Caco-2 (cell line): ENCODE measurements at regions of chr7 and their contacts with region 1.

Region 1: DNA sequence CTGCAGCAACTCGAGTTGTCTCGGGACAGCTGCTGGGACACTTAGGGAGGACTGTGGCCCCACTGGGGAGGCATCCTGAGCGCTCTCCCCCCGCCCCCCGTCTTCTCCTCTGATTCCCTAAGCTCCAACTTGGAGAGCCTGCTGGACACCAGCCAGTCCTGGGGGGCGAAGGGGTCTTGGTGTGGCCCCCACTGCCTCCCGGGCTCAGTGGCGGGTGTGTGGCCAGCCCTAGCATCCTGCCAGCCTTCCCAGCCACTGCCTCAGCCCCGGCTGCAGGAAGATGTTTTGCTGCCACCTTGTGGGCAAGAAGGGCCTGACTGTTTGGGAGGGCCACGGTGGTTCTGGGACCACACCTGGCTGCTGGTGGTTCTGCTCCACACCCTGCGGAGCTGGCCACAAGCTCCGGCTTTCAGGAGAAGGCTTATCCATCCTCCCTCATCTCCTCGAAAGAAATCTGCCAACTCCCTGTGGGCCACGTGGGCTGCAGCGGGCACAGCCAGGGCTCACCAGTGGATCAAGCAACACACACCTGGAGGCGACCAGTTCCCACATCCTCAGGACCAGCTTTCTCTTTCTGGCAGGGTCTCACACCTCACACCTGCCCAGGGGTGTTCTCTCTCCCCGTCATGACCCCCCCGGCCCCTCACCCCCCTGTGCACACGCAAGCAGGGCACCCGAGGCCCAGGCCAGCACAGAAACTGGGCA is 24.8 kb downstream of the AGAP3 start:
- DNase-seq: peak; percentile 76 to 87
- H3K4me3 ChIP-seq: no peak overlapping the region
- H3K4me3 Mint-ChIP-seq: no peak overlapping the region
- H3K27ac Mint-ChIP-seq: no peak overlapping the region
- H3K4me1 ChIP-seq: peaks cover 41% of the 10 kb centered on the region
- H3K4me1 Mint-ChIP-seq: peaks cover 37% of the 10 kb centered on the region
- H3K27me3 ChIP-seq: no peaks in the 10 kb centered on the region
- H3K27me3 Mint-ChIP-seq: no peaks in the 10 kb centered on the region
- CTCF ChIP-seq: peak; percentile 84 to 87

Region 2: DNA sequence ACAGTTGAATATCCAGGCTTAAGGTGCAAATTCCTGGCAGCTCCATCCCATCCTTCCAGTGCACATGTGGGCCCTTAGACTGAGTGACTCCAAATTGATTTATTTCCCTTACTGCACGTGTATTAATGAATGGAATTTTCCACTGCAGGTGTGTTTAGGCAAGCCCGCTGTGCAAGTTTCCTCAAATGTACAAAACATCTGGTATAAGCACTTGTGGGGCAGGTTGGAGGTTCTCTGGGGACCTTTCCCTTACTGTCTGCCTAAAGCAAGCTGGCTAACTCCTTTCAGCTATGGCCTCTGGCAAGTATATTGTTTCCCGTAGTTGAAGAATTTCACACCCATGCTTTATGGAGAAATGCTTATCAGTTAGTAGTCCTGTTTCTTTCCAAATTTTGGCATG is 453.6 kb before region 1 on chr7:
- CTCF ChIA-PET with region 1: no interaction called
- POLR2A ChIA-PET with region 1: no interaction called
- intact Hi-C with region 1: no loop called
- DNase-seq: no peak
- H3K4me3 ChIP-seq: no peak overlapping the region
- H3K4me3 Mint-ChIP-seq: no peak overlapping the region
- H3K27ac Mint-ChIP-seq: no peak overlapping the region
- H3K4me1 ChIP-seq: no peaks in the 10 kb centered on the region
- H3K4me1 Mint-ChIP-seq: no peaks in the 10 kb centered on the region
- H3K27me3 ChIP-seq: no peaks in the 10 kb centered on the region
- H3K27me3 Mint-ChIP-seq: peaks cover 6% of the 10 kb centered on the region
- CTCF ChIP-seq: no peak

Region 3: GRCh38 chr7:150898475-150899011 is 212.6 kb before region 1 on chr7:
- CTCF ChIA-PET with region 1: no interaction called
- POLR2A ChIA-PET with region 1: no interaction called
- intact Hi-C with region 1: loop called (anchors 2 kb)
- DNase-seq: peak; percentile 78 to 82
- H3K4me3 ChIP-seq: no peak overlapping the region
- H3K4me3 Mint-ChIP-seq: peak overlapping the region; percentile 17
- H3K27ac Mint-ChIP-seq: no peak overlapping the region
- H3K4me1 ChIP-seq: peaks cover 11% of the 10 kb centered on the region; the same call in 1 of the 2 replicates
- H3K4me1 Mint-ChIP-seq: peaks cover 19% of the 10 kb centered on the region
- H3K27me3 ChIP-seq: no peaks in the 10 kb centered on the region; the same call in 1 of the 2 replicates
- H3K27me3 Mint-ChIP-seq: peaks cover 15% of the 10 kb centered on the region
- CTCF ChIP-seq: peak; percentile 91 to 95

Region 4: GRCh38 chr7:150962553-150963399 is 148.3 kb before region 1 on chr7:
- CTCF ChIA-PET with region 1: interaction called, 5 read pairs
- POLR2A ChIA-PET with region 1: no interaction called
- intact Hi-C with region 1: loop called (anchors 2 kb)
- DNase-seq: peak in 1 of 2 experiments; percentile 66
- H3K4me3 ChIP-seq: no peak overlapping the region
- H3K4me3 Mint-ChIP-seq: no peak overlapping the region
- H3K27ac Mint-ChIP-seq: no peak overlapping the region
- H3K4me1 ChIP-seq: no peaks in the 10 kb centered on the region
- H3K4me1 Mint-ChIP-seq: peaks cover 12% of the 10 kb centered on the region
- H3K27me3 ChIP-seq: no peaks in the 10 kb centered on the region
- H3K27me3 Mint-ChIP-seq: peaks cover 11% of the 10 kb centered on the region
- CTCF ChIP-seq: peak; percentile 89 to 96

Region 5: DNA sequence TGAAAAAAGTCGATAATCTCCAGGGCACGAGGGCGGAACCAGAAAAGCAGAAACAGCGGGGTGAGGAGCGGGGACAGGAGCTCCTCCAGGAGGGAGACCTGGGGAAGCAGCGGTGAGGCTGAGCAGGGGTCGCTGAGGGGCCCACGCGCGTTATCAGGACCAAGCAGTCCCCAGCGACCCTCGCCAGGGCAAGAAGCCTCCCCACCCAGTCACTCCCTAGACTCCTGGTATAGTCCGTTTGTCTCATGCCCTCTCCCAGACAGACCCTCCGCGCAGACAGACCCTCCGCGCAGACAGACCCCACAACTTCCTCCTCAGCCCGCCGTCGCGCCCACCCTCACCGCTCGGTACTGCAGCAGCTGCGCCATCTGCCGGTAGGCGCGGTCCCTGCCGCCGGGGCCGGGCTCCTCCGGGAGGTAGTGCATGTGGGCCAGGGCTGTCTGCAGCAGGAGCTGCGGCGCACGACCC is 93.1 kb before region 1 on chr7:
- CTCF ChIA-PET with region 1: interaction called, 6 read pairs
- POLR2A ChIA-PET with region 1: no interaction called
- intact Hi-C with region 1: loop called (anchors 5 kb)
- DNase-seq: peak; percentile 74 to 89
- H3K4me3 ChIP-seq: peak overlapping the region; percentile 33
- H3K4me3 Mint-ChIP-seq: peak overlapping the region; percentile 77
- H3K27ac Mint-ChIP-seq: peak overlapping the region; percentile 80
- H3K4me1 ChIP-seq: peaks cover 26% of the 10 kb centered on the region
- H3K4me1 Mint-ChIP-seq: peaks cover 12% of the 10 kb centered on the region
- H3K27me3 ChIP-seq: no peaks in the 10 kb centered on the region
- H3K27me3 Mint-ChIP-seq: peaks cover 6% of the 10 kb centered on the region
- CTCF ChIP-seq: peak; percentile 91 to 98

Region 6: GRCh38 chr7:151028131-151028947 is 82.8 kb before region 1 on chr7 and contains the start of gene ABCB8:
- CTCF ChIA-PET with region 1: interaction called, 11 read pairs
- POLR2A ChIA-PET with region 1: interaction called, 3 read pairs
- intact Hi-C with region 1: loop called (anchors 1 kb)
- DNase-seq: peak; percentile 100
- H3K4me3 ChIP-seq: peak within 1 kb of the TSS; percentile 70
- H3K4me3 Mint-ChIP-seq: peak within 1 kb of the TSS; percentile 87
- H3K27ac Mint-ChIP-seq: peak within 1 kb of the TSS; percentile 99
- H3K4me1 ChIP-seq: peaks cover 30% of the 10 kb centered on the region
- H3K4me1 Mint-ChIP-seq: peaks cover 35% of the 10 kb centered on the region
- H3K27me3 ChIP-seq: no peaks in the 10 kb centered on the region
- H3K27me3 Mint-ChIP-seq: no peaks in the 10 kb centered on the region
- CTCF ChIP-seq: peak; percentile 65 to 67
- total RNA-seq, gene ABCB8: 30.1 and 30.8 TPM in 2 replicates

Region 7: DNA sequence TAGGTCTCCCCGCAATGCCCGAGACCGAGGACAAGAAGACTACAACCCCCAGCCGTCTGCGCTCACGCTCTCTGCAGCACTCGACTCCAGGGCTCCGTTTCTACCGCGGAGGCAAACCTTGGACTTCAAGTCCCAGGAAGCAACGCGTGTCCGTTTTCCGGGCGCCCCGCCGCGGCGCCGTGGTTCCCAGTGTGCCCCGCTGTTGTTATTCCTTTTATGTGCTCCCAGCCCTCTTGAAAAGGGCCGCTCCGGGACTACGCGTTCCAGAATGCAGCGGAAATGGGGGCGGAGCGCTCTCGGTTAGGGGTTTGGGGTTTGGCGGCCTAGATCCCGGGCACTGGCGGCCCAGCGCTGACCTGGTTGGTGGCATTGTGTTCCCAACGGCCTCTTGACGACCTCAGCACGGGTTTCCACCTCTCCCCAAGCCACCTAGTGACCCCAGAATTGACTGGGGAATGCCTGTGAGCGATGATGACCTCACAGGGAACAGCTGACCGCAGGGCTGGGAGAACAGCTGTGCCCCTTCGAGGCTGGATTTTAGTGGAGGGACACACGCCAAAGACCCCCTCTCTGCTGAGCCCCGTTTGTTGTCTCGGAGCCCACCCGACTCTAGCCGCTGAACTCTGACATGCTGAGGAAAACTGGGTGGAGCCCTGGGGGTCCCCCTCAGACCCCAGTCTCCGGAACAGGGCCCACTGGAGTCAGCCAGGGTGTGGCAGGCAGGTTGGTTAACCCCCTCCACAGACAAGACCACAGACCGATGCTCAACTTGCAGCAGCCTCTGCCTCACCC is 52.9 kb before region 1 on chr7:
- CTCF ChIA-PET with region 1: interaction called, 3 read pairs
- POLR2A ChIA-PET with region 1: no interaction called
- intact Hi-C with region 1: loop called (anchors 1 kb)
- DNase-seq: peak; percentile 98 to 99
- H3K4me3 ChIP-seq: peak overlapping the region; percentile 59
- H3K4me3 Mint-ChIP-seq: peak overlapping the region; percentile 95
- H3K27ac Mint-ChIP-seq: peak overlapping the region; percentile 94
- H3K4me1 ChIP-seq: peaks cover 23% of the 10 kb centered on the region
- H3K4me1 Mint-ChIP-seq: peaks cover 25% of the 10 kb centered on the region
- H3K27me3 ChIP-seq: no peaks in the 10 kb centered on the region
- H3K27me3 Mint-ChIP-seq: no peaks in the 10 kb centered on the region
- CTCF ChIP-seq: no peak

Region 8: DNA sequence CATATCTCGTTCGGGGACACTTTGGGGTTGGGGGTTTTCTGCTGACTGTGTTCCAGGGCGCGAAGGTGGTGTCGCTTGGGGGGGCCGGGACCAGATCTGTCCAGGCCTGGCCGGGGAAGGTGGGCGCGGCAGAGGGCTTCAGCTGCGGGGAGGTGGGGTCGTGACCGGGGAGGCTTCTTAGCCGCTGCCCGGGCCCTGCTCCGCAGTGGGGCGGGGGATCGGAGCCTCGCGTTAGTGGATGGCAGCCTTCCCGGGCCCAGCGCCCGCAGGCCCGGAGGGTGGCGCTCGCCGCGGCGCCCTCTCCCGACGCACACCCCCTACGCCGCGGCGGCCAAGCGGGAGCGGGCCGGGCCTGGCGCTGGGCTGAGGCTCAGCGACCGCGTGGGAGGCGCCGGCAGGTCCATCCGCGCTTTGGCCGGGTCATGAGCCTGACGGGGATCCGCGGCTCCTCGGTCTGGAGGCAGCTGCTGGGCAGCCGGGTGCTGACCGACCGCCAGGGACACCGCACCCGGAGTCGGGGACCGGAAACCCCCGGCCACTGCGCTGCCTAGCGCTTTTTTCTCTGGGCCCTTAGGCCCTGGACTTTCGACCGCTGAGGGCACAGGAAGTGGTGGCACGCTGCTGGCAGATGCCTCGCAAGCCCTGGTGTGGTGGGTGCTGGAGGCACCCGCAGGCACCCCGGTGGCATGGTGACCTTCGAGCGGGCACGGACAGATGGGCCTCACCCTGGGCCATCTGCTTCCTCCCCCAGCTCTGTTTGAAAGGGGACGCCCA is 23.7 kb before region 1 on chr7:
- CTCF ChIA-PET with region 1: interaction called, 3 read pairs
- POLR2A ChIA-PET with region 1: interaction called, 3 read pairs
- intact Hi-C with region 1: loop called (anchors 1 kb)
- DNase-seq: peak in 1 of 2 experiments; percentile 70
- H3K4me3 ChIP-seq: peak overlapping the region; percentile 75
- H3K4me3 Mint-ChIP-seq: peak overlapping the region; percentile 93
- H3K27ac Mint-ChIP-seq: no peak overlapping the region
- H3K4me1 ChIP-seq: peaks cover 18% of the 10 kb centered on the region
- H3K4me1 Mint-ChIP-seq: peaks cover 34% of the 10 kb centered on the region
- H3K27me3 ChIP-seq: no peaks in the 10 kb centered on the region
- H3K27me3 Mint-ChIP-seq: no peaks in the 10 kb centered on the region
- CTCF ChIP-seq: peak in 1 of 2 experiments; percentile 42

Region 9: GRCh38 chr7:151361193-151361959 is 250.3 kb after region 1 on chr7:
- CTCF ChIA-PET with region 1: no interaction called
- POLR2A ChIA-PET with region 1: no interaction called
- intact Hi-C with region 1: no loop called
- DNase-seq: no peak
- H3K4me3 ChIP-seq: no peak overlapping the region
- H3K4me3 Mint-ChIP-seq: no peak overlapping the region
- H3K27ac Mint-ChIP-seq: no peak overlapping the region
- H3K4me1 ChIP-seq: no peaks in the 10 kb centered on the region
- H3K4me1 Mint-ChIP-seq: no peaks in the 10 kb centered on the region
- H3K27me3 ChIP-seq: no peaks in the 10 kb centered on the region
- H3K27me3 Mint-ChIP-seq: no peaks in the 10 kb centered on the region
- CTCF ChIP-seq: no peak